CD4-positive, alpha-beta memory T cell (primary cell): ENCODE measurements at regions of chr17 and their contacts with region 1.

Region 1: DNA sequence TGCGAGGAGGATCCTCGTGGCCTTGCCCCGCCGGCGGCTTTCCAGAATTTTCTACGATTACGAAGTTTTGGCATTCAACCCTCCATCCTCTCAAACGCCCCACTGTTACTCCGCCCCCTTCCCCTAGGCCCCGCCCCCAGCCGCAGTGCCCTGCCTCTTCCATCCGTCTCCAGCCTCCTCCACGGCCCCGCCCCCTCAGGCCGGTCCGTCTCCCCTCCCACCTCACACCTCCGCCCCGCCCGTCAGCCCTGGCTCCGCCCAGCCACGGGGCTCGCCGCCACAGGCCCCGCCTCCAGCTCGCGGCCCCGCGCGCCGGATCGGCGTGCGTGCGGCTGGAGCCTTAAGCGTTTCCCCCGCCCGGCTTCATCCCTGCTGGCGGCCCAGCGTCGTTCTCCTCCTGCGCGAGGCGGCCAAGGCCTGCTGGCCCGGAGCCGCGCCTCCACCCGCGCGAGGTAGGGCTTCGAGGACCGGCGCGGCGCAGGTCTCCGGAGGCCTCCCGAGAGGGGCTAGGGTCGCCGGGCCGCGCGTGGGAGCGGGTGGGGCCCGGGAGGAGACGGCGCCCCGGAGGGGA is at the starts of genes C17orf67 and DGKE:
- DNase-seq: peak; percentile 98 to 99 (median 98)
- H3K4me3 ChIP-seq: peak within 1 kb of the TSS; percentile 49 to 88
- H3K4me3 Mint-ChIP-seq: peak within 1 kb of the TSS; percentile 95 to 98 (median 96)
- H3K27ac ChIP-seq: peak within 1 kb of the TSS; percentile 79
- H3K27ac Mint-ChIP-seq: peak within 1 kb of the TSS; percentile 92 to 97 (median 95)
- H3K4me1 ChIP-seq: peaks cover 67% of the 10 kb centered on the region
- H3K4me1 Mint-ChIP-seq: peaks cover 43 to 75% (median 57%) of the 10 kb centered on the region in 4 donors
- H3K27me3 ChIP-seq: no peaks in the 10 kb centered on the region
- H3K27me3 Mint-ChIP-seq: no peaks in the 10 kb centered on the region
- total RNA-seq, gene C17orf67: 9.5 to 11.2 TPM
- total RNA-seq, gene DGKE: 36.7 to 37.7 TPM

Region 2: DNA sequence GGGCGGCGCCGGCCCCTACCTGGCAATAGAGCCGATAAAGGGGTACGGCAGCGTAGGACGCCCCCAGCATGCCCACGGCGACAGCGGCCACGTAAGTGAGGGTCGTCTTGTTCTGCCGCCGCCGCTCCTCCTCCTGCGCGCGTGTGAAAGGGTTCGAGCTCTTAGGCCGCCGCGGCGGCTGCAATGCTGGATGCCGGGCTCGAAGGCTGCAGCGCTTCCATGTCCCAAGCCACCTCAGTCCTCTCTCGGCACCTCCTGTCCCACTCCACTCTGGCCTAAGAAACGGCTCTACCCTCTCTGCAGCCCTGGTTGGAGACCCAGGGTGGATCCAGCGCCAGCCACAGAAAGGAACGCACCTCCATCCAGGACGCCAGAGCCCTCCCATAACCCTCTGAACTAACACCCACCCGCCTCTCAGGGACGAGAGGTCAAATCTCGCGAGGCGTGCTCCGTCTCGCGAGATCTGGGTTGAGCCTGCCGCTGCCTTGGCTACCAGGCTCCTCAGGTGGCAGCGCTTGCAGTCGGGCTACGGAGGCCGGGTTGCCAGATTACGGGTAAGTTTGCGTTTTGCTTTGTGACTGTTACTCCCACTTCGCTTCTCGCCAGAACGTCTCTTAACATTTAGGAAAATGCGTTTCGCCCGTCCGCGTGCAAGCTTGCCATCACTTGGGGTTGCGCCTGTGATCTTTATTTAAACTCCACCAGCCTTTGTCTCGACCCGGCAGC is 1865.5 kb before region 1 on chr17 and contains the starts of genes COX11 and STXBP4:
- CTCF ChIA-PET with region 1: no interaction called
- POLR2A ChIA-PET with region 1: no interaction called
- intact Hi-C with region 1: loop called (anchors 2 kb)
- DNase-seq: peak; percentile 94 to 96 (median 95)
- H3K4me3 ChIP-seq: peak within 1 kb of the TSS; percentile 78 to 84
- H3K4me3 Mint-ChIP-seq: no peak within 1 kb of the TSS
- H3K27ac ChIP-seq: peak within 1 kb of the TSS; percentile 90
- H3K27ac Mint-ChIP-seq: no peak within 1 kb of the TSS
- H3K4me1 ChIP-seq: peaks cover 29% of the 10 kb centered on the region
- H3K4me1 Mint-ChIP-seq: peaks cover 8 to 23% (median 18%) of the 10 kb centered on the region in 4 donors
- H3K27me3 ChIP-seq: no peaks in the 10 kb centered on the region
- H3K27me3 Mint-ChIP-seq: no peaks in the 10 kb centered on the region
- total RNA-seq, gene COX11: 84.0 to 86.0 TPM
- total RNA-seq, gene STXBP4: 11.1 to 12.8 TPM

Region 3: GRCh38 chr17:56690486-56691291 is 143.2 kb before region 1 on chr17:
- CTCF ChIA-PET with region 1: no interaction called
- POLR2A ChIA-PET with region 1: no interaction called
- intact Hi-C with region 1: no loop called
- DNase-seq: no peak
- H3K4me3 ChIP-seq: no peak overlapping the region
- H3K4me3 Mint-ChIP-seq: no peak overlapping the region
- H3K27ac ChIP-seq: no peak overlapping the region
- H3K27ac Mint-ChIP-seq: no peak overlapping the region
- H3K4me1 ChIP-seq: no peaks in the 10 kb centered on the region
- H3K4me1 Mint-ChIP-seq: no peaks in the 10 kb centered on the region
- H3K27me3 ChIP-seq: no peaks in the 10 kb centered on the region
- H3K27me3 Mint-ChIP-seq: peaks cover 9 to 15% of the 10 kb centered on the region in 2 donors

Region 4: DNA sequence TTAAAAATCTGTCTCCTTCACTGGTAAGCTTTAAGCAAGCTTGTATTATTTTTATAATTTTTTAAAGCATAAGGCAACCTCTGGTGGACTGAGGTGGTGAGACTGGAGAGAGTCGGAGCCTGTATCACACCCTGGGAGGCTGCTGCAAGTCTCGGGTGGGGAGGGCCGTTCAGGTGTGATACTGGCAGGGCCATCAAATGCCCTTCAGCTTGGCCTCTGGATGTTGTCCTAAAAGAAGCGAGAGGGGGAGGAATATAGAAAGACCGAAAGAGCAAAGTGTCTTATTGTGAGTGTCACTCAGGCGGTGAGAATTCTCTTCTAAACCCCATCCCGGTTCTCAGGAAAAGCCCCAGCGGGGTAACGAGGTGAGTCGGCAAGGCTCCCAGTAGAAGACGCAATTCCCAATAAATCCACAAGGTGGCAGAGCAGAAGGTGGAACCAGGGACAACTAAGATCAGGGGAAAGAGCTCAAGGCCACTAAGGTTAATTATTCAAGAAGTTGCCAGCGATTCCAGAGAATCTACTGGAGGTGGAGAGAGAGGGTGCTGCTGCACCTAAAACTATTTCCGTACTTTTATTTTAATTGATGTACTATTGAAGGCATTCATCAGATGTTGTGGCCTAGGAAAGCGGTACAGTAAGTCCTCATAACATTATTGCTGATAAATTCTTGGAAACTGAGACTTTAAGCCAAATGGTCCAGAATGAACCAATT is 14.3 kb before region 1 on chr17:
- CTCF ChIA-PET with region 1: interaction called, 38 read pairs
- POLR2A ChIA-PET with region 1: interaction called, 21 read pairs
- intact Hi-C with region 1: loop called (anchors 1 kb)
- DNase-seq: peak; percentile 69 to 78 (median 71)
- H3K4me3 ChIP-seq: no peak overlapping the region
- H3K4me3 Mint-ChIP-seq: no peak overlapping the region
- H3K27ac ChIP-seq: no peak overlapping the region
- H3K27ac Mint-ChIP-seq: peak overlapping the region in 1 of 7 donors; percentile 29
- H3K4me1 ChIP-seq: peaks cover 4% of the 10 kb centered on the region
- H3K4me1 Mint-ChIP-seq: peaks cover 0 to 6% (median 4%) of the 10 kb centered on the region in 4 donors
- H3K27me3 ChIP-seq: no peaks in the 10 kb centered on the region
- H3K27me3 Mint-ChIP-seq: no peaks in the 10 kb centered on the region

Region 5: GRCh38 chr17:56913864-56914640 is 80.2 kb after region 1 on chr17 and contains the start of gene TRIM25:
- CTCF ChIA-PET with region 1: no interaction called
- POLR2A ChIA-PET with region 1: interaction called, 6 read pairs
- intact Hi-C with region 1: loop called (anchors 1 kb)
- DNase-seq: peak; percentile 75 to 93 (median 80)
- H3K4me3 ChIP-seq: peak within 1 kb of the TSS; percentile 79 to 91
- H3K4me3 Mint-ChIP-seq: peak within 1 kb of the TSS; percentile 80 to 97 (median 90)
- H3K27ac ChIP-seq: peak within 1 kb of the TSS; percentile 85
- H3K27ac Mint-ChIP-seq: peak within 1 kb of the TSS; percentile 78 to 98 (median 94)
- H3K4me1 ChIP-seq: peaks cover 43% of the 10 kb centered on the region
- H3K4me1 Mint-ChIP-seq: peaks cover 33 to 44% (median 40%) of the 10 kb centered on the region in 4 donors
- H3K27me3 ChIP-seq: no peaks in the 10 kb centered on the region
- H3K27me3 Mint-ChIP-seq: no peaks in the 10 kb centered on the region
- total RNA-seq, gene TRIM25: 58.4 to 62.7 TPM

Region 6: DNA sequence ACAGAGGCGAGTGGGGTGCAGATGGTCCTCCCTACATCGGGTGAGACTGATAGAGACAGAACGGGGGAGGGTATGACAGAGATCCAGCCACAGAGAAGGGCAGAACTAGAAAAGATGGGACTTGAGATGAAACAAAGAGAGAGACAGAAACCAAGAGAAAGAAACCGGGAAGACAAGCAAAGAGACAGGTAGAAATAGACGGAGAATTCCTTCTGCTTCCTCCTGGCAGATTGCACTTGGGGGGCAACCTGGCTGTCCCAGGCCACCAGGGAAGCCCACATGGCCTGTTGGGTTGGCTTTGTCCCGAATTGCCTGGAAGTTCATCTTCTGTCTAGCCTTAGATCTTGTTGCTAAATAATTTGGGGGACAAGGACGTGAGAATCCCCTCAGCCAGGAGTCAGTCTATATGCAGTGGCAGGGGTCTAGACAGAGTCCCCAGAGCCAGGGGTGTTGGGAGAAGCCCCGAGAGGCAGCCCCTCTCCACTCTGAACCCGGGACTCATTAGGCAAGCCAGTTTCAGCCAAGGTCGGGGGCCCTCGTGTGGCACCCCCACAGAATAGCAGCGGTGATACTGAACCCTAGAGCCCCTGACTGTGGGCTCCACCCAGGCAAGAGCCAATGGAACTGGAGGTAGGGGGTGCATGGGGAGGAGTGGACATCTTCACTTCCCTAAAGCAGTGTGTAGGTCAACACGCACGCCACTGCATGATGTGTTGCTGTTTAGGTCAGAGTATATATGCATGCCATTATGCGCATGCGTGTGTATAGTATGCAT is 1495.3 kb after region 1 on chr17:
- CTCF ChIA-PET with region 1: no interaction called
- POLR2A ChIA-PET with region 1: no interaction called
- intact Hi-C with region 1: loop called (anchors 5 kb)
- DNase-seq: peak; percentile 67 to 79 (median 73)
- H3K4me3 ChIP-seq: peak overlapping the region; percentile 82 to 99
- H3K4me3 Mint-ChIP-seq: peak overlapping the region; percentile 88 to 99 (median 98)
- H3K27ac ChIP-seq: peak overlapping the region; percentile 97
- H3K27ac Mint-ChIP-seq: peak overlapping the region; percentile 93 to 99 (median 97)
- H3K4me1 ChIP-seq: peaks cover 47% of the 10 kb centered on the region
- H3K4me1 Mint-ChIP-seq: peaks cover 25 to 72% (median 36%) of the 10 kb centered on the region in 4 donors
- H3K27me3 ChIP-seq: no peaks in the 10 kb centered on the region
- H3K27me3 Mint-ChIP-seq: no peaks in the 10 kb centered on the region